Spleen (tissue), 13 donors: ENCODE measurements at regions of chr17 and their contacts with region 1.

Region 1: DNA sequence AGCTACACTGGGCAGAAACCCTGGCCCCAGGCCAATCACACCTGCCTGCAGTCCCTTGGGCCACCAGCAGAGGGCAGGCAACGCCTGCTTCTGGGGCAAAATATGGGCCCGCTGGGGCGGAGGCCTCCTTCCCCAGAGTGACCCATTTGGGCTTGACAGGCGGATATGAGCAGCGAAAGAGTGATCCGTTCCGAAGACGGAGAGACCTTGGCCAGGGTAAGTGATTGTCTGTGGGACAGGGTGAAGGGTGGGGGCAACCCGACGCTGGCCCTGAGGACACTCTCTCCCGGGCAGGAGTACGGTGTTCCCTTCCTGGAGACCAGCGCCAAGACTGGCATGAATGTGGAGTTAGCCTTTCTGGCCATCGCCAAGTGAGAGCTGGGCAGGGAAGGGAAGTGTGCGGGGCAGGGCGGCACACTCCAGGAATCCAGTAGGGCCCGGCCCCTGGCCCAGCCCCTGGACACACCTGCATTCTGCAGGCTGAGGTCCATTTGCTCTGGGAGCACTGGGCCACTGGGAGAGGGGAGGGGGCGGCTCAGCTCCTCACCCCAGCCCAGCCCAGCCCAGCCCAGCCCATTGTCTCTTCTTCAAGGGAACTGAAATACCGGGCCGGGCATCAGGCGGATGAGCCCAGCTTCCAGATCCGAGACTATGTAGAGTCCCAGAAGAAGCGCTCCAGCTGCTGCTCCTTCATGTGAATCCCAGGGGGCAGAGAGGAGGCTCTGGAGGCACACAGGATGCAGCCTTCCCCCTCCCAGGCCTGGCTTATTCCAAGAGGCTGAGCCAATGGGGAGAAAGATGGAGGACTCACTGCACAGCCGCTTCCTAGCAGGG is 3.5 kb upstream of the NHERF1 start:
- DNase-seq: peak; percentile 97
- H3K4me3 ChIP-seq: peak overlapping the region in 2 of 8 donors; percentile 16 to 34
- H3K27ac ChIP-seq: peak overlapping the region in 7 of 8 donors; percentile 9 to 94 (median 87)
- H3K4me1 ChIP-seq: peaks cover 48 to 96% (median 88%) of the 10 kb centered on the region in 6 donors
- H3K27me3 ChIP-seq: peaks cover 0 to 5% (median 0%) of the 10 kb centered on the region in 7 donors
- CTCF ChIP-seq: peak; percentile 99 to 100 (median 99)
- POLR2A ChIP-seq: no peak

Region 2: DNA sequence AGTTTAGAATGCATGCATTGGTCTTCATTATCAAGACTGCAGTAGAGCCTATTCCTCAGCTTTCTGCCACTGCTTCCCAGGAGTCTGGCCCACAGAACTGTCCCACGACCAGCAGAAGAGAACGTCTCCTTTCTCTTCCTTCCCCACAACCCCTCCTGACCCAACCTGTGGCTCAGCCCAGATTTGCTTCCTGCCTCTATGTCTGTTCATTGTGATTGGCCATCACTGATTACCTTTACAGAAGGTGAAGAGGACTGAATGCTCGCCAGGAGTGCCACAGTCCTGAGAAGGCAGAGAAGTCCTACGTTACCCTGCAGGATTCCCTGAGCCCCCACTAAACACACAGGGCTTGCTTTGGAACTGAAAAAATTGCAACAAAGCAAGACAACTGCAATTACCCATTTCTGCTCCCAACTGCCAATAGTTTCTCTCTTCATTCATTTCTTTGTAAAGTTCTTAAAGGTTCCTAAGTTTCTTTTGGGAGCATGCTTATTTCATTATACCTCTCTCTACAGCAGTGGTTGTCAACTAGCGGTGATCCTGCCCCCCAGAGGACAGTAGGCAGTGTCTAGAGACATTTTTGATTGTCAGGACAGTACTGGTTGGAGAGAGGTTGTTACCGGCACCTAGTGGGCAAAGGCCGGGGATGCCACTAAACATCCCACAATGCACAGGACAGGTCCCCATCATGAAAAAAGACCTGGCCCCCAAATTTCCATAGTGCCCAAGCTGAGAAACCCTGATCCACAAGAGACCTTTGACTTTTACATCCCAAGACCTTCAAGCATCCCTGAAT is 35.7 kb after region 1 on chr17:
- intact Hi-C with region 1: loop called (anchors 5 kb)
- DNase-seq: no peak
- H3K4me3 ChIP-seq: peak overlapping the region in 1 of 8 donors; percentile 50
- H3K27ac ChIP-seq: peak overlapping the region; percentile 31 to 90 (median 80)
- H3K4me1 ChIP-seq: peaks cover 23 to 82% (median 50%) of the 10 kb centered on the region in 6 donors
- H3K27me3 ChIP-seq: no peaks in the 10 kb centered on the region
- CTCF ChIP-seq: peak in 5 of 11 experiments; percentile 10 to 35 (median 20)
- POLR2A ChIP-seq: no peak

Region 3: DNA sequence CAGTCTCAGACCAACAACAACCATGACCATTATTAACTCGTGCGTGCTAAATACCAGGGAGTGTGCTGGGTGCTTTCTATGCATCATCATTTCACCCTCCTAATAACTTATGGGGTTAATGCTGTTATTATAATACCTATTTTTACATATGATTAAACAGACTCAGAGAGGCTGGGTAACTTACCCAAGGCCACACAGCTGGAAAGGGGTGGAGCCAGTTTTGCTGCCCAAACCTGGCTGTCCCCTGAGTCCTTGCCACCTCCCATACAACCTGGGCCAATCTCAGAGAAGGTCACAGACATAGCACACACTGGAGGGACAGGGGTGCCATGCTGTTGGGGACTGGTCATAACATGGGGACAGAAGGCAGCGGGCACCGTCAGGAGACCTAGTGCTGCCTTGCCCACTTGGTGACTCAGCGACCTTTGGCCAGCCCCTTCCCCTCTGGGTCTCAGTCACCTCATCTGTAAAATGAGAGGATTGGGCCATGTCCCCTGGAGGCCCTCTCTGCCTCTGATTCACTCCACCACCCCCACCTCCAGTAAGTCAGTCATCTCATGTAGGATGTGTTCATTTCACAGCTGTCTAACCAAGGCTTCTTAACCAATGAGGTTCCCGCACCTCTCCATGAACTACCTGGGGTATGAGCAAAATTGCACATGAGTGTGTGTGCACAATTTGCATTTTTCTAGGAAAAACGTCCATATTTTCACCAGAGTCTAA is 159.9 kb after region 1 on chr17:
- intact Hi-C with region 1: no loop called
- DNase-seq: no peak
- H3K4me3 ChIP-seq: no peak overlapping the region
- H3K27ac ChIP-seq: no peak overlapping the region
- H3K4me1 ChIP-seq: no peaks in the 10 kb centered on the region
- H3K27me3 ChIP-seq: peaks cover 0 to 58% (median 6%) of the 10 kb centered on the region in 7 donors
- CTCF ChIP-seq: no peak
- POLR2A ChIP-seq: no peak